ENCODE measurements at regions of chr5 and their contacts with region 1.

Region 1: DNA sequence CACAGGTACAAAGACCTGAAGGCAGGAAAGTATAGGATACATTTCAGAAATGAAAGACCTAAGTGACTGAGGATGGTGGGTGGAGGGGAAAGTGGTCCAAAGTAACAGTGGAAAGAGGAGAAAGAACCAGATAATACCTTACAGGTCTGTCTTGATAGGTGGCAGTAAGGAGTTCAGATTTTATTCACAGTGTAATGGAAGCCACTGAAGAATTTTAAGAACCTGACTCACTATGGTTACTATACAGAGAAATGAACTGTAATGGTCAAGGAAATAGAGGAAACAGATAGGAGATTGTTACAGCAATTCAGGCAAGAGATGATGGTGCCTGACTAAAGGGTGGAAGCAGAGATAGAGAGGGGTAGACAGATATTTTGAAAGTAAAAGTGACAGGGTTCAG is 46.5 kb downstream of the EPB41L4A start:
- DNase-seq: no peak
- H3K4me3 ChIP-seq: no peak overlapping the region
- H3K27ac ChIP-seq: no peak overlapping the region
- H3K27me3 ChIP-seq: no peaks in the 10 kb centered on the region
- CTCF ChIP-seq: no peak

Region 2: DNA sequence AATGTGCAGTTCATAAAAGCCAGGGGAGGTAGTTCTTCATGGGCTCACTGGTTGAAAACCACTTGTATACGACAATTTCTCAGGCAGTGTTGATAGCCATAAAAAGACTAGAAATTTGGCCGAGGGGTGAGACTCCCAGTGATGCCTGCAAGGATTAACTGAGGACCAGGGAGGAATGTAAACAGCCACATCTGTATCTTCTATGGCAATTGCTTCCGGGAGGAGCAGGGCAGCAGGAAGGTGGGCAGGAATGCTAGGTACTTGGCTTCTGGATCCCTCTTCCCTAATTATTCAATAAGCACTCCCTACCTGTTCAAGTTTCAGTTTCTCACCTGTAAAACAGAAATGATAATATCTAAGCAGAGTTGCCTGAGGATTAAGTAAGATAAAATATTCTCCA is 1691.4 kb before region 1 on chr5:
- CTCF ChIA-PET with region 1: interaction called, 13 read pairs
- POLR2A ChIA-PET with region 1: no interaction called
- DNase-seq: no peak
- H3K4me3 ChIP-seq: no peak overlapping the region
- H3K27ac ChIP-seq: no peak overlapping the region
- H3K27me3 ChIP-seq: no peaks in the 10 kb centered on the region
- CTCF ChIP-seq: no peak